ENCODE measurements at regions of chr14 and their contacts with region 1.

Region 1: DNA sequence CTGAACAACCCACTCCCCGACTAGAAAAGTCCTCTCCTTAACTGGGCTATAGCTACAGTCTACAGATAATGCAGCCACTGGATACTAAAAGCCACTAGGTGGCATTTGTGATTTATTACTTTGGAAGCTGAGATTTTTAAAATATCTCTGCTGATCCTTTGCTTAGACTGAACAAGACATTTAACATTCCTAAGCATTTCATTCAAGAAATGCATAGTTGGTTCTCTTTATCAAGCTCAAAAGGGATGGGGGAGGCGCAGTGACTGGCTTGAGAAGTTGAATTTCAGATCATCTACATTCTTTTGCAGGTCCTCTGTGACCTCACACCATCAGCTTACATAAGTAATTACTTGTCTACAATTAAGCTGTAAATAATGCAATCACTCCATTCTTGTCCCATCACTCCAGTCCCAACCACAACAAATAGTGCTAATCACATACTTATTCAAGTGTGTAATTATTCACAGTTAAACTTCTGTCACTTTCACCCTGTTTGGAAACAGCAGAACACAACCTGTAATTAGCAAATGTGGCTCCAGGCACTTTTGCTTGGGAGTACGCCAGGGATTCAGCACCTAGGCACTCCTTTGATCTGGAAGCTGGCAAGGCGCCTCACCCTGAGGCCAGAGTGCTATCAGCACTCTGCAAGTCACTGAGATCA is 203.6 kb downstream of the NOVA1 start:
- DNase-seq: no peak
- ATAC-seq: no peak
- H3K4me3 ChIP-seq: no peak overlapping the region
- H3K27ac ChIP-seq: no peak overlapping the region
- H3K4me1 ChIP-seq: peaks cover 0 to 2% of the 10 kb centered on the region in 2 donors
- H3K27me3 ChIP-seq: no peaks in the 10 kb centered on the region

Region 2: GRCh38 chr14:26332966-26333365 is 61.3 kb before region 1 on chr14:
- intact Hi-C with region 1: no loop called
- DNase-seq: peak in 1 of 2 donors; percentile 45
- ATAC-seq: no peak
- H3K4me3 ChIP-seq: no peak overlapping the region
- H3K27ac ChIP-seq: no peak overlapping the region
- H3K4me1 ChIP-seq: no peaks in the 10 kb centered on the region
- H3K27me3 ChIP-seq: no peaks in the 10 kb centered on the region

Region 3: GRCh38 chr14:26730929-26731618 is 336.8 kb after region 1 on chr14:
- intact Hi-C with region 1: loop called in 1 of 2 experiments (anchors 5 kb)
- DNase-seq: peak in 1 of 2 donors; percentile 27
- ATAC-seq: no peak
- H3K4me3 ChIP-seq: no peak overlapping the region
- H3K27ac ChIP-seq: no peak overlapping the region
- H3K4me1 ChIP-seq: no peaks in the 10 kb centered on the region
- H3K27me3 ChIP-seq: no peaks in the 10 kb centered on the region

Region 4: GRCh38 chr14:26905225-26905624 is 510.9 kb after region 1 on chr14:
- intact Hi-C with region 1: no loop called
- DNase-seq: no peak
- ATAC-seq: no peak
- H3K4me3 ChIP-seq: no peak overlapping the region
- H3K27ac ChIP-seq: no peak overlapping the region
- H3K4me1 ChIP-seq: no peaks in the 10 kb centered on the region
- H3K27me3 ChIP-seq: no peaks in the 10 kb centered on the region